Activated T-helper 2 cell treated with anti-CD3 and anti-CD28 coated beads, Interferon-gamma antibody, Interleukin-2, Interleukin-4, amounts not matched to agents 10 μg/mL and 5 μg/mL and 100 μg/mL, durations not matched to agents 14 hours and 24 hours and 36 hours (primary cell): ENCODE measurements at regions of chr14 and their contacts with region 1.

Region 1: DNA sequence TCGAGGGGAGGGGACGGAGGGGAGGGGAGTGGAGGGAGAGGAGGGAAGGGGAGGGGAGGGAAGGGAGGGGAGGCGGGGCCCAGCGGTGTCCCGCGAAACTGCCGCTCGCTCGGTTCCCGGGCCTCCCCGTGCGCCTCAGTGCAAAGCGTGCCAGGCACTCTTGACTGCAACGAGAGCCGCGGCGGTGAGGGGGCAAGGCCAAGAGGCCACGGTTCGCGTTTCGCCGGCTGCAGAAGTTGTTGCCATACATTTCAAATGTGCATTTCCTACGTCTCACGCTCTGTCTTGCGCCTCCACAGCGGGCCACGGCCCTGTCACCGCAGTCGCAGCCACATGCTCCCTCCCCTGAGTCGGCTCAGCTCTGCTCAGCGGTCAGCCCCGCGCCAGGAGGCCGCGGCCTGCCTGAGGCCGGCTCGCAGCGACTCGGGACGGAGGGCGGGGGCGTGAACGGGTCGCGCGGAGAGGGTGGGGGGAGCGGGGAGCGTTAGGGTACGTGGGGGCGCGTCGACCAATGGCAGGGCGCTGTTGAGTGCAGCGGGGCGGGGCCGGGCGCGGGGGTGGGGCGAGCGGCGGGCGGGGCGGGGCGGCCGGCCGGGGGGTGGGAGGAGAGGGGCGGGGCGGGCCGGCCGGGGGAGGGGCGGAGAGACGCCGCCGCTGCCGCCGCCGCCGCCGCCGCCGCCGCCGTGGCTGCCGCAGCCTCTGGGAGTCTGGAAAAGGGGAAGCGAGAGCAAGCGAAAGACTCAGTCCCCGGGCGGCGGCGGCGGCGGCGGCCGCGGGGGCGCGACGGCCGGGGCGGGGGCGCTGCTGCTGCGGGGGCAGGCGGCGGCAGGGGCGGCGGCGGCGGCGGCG is at the start of gene PPP2R5C:
- DNase-seq: peak; percentile 79
- H3K4me3 Mint-ChIP-seq: peak within 1 kb of the TSS; percentile 84
- H3K27ac Mint-ChIP-seq: peak within 1 kb of the TSS; percentile 53
- H3K4me1 Mint-ChIP-seq: peaks cover 31% of the 10 kb centered on the region
- H3K27me3 Mint-ChIP-seq: peaks cover 5% of the 10 kb centered on the region
- total RNA-seq, gene PPP2R5C: 170 and 174 TPM in 2 replicates

Region 2: DNA sequence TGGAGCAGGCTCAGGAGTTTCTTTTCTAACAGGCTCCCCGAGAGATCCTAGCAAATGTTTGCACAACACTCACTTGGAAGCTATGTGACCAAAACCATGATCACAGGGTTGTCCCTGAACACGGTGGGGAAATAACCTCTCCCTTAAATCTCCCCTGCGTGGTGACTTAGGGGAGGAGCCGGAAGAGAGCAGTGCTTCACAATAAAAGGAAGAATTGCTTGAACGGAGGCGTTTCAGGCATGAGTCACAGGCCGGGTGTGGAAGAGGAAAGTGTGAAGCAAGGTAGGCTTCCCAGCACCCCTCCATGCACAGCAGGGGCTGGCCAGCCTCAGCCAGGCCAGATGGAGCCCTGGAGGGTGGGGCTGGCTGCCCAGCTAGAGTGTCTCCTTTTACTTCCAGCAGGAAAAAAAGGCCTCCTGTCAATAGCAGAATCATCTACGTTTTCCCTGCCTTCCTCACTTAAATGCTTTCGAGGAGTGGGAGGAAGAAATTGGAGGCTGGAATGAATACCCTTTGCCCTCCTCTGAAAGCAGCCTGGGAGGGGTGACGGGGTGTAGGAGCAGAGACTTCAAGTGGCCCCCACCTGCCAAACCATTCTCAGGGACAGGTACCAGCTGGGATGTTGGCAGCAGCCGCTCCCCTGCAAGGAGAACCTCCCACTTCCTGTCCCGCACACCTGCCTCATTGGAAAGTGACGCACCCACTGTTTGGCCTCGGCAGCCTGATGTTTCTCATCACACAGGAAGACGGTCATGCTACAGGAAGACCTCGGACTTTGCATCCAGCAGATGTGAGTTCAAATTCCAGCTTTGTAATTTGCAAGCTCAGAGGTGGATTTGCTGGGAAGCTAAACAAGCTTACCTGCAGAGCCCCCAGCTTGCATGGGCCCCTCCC is 29.8 kb before region 1 on chr14:
- intact Hi-C with region 1: loop called (anchors 2 kb)
- DNase-seq: peak; percentile 76
- H3K4me3 Mint-ChIP-seq: peak overlapping the region; percentile 70
- H3K27ac Mint-ChIP-seq: peak overlapping the region; percentile 93
- H3K4me1 Mint-ChIP-seq: peaks cover 56% of the 10 kb centered on the region
- H3K27me3 Mint-ChIP-seq: no peaks in the 10 kb centered on the region

Region 3: GRCh38 chr14:101809671-101810514 is 48.6 kb after region 1 on chr14:
- intact Hi-C with region 1: loop called (anchors 2 kb)
- DNase-seq: peak; percentile 84
- H3K4me3 Mint-ChIP-seq: peak overlapping the region; percentile 94
- H3K27ac Mint-ChIP-seq: peak overlapping the region; percentile 99
- H3K4me1 Mint-ChIP-seq: peaks cover 49% of the 10 kb centered on the region
- H3K27me3 Mint-ChIP-seq: no peaks in the 10 kb centered on the region

Region 4: DNA sequence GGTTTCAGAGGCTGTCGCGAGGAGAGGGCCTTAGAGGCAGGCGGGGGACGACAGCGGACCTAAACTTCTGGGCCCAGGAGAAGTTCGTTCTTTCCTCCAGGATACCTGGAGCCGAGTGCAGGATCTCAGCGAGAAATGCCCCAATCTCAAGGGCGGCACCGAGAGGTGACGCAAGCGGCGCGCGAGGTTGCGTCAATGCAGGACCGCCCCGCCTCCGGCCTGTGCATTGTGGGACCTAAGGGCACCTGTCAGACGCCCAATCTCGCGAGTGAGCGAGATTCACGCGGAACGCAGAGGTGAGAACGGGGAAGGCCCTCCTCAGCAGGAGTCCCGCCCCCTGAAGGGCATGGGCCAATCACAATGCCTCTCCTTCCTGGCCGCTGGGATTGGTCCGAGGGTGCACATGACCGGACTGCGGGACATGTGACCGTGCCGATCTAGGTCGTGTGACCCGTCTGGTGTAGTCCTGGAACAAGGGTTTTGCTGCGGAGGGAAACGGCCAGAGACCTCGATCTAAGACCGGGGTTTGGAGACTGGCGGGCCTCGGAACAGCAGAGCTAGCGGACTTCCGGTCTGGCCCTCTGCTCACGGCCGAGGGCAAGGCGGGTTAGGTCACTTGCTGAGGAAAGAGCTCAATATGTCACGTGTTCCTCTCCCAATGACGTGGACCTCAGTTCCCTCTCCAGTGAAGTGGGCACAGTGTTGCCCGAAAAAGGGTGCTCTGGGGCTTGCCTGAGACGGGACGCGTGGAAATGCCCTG is 186.8 kb after region 1 on chr14:
- intact Hi-C with region 1: loop called (anchors 1 kb)
- DNase-seq: peak; percentile 100
- H3K4me3 Mint-ChIP-seq: peak overlapping the region; percentile 95
- H3K27ac Mint-ChIP-seq: peak overlapping the region; percentile 97
- H3K4me1 Mint-ChIP-seq: peaks cover 11% of the 10 kb centered on the region
- H3K27me3 Mint-ChIP-seq: peaks cover 15% of the 10 kb centered on the region